ENCODE measurements at regions of chr7 and their contacts with region 1.

Region 1: GRCh38 chr7:129952653-129953560 is at the start of gene UBE2H:
- DNase-seq: peak; percentile 91
- H3K4me3 Mint-ChIP-seq: peak within 1 kb of the TSS; percentile 99
- H3K27ac Mint-ChIP-seq: peak within 1 kb of the TSS; percentile 96
- H3K4me1 Mint-ChIP-seq: peaks cover 4% of the 10 kb centered on the region
- H3K27me3 Mint-ChIP-seq: no peaks in the 10 kb centered on the region
- total RNA-seq, gene UBE2H: 33.4 to 37.6 TPM

Region 2: GRCh38 chr7:129611246-129612111 is 341.4 kb before region 1 on chr7 and contains the start of gene NRF1:
- CTCF ChIA-PET with region 1: no interaction called
- intact Hi-C with region 1: loop called (anchors 2 kb)
- DNase-seq: peak; percentile 91
- H3K4me3 Mint-ChIP-seq: peak within 1 kb of the TSS; percentile 97
- H3K27ac Mint-ChIP-seq: peak within 1 kb of the TSS; percentile 98
- H3K4me1 Mint-ChIP-seq: peaks cover 56% of the 10 kb centered on the region
- H3K27me3 Mint-ChIP-seq: no peaks in the 10 kb centered on the region
- total RNA-seq, gene NRF1: 18.5 to 21.5 TPM

Region 3: GRCh38 chr7:129875745-129876411 is 77.0 kb before region 1 on chr7:
- CTCF ChIA-PET with region 1: no interaction called
- intact Hi-C with region 1: loop called (anchors 2 kb)
- DNase-seq: no peak
- H3K4me3 Mint-ChIP-seq: no peak overlapping the region
- H3K27ac Mint-ChIP-seq: no peak overlapping the region
- H3K4me1 Mint-ChIP-seq: peaks cover 48% of the 10 kb centered on the region
- H3K27me3 Mint-ChIP-seq: no peaks in the 10 kb centered on the region

Region 4: DNA sequence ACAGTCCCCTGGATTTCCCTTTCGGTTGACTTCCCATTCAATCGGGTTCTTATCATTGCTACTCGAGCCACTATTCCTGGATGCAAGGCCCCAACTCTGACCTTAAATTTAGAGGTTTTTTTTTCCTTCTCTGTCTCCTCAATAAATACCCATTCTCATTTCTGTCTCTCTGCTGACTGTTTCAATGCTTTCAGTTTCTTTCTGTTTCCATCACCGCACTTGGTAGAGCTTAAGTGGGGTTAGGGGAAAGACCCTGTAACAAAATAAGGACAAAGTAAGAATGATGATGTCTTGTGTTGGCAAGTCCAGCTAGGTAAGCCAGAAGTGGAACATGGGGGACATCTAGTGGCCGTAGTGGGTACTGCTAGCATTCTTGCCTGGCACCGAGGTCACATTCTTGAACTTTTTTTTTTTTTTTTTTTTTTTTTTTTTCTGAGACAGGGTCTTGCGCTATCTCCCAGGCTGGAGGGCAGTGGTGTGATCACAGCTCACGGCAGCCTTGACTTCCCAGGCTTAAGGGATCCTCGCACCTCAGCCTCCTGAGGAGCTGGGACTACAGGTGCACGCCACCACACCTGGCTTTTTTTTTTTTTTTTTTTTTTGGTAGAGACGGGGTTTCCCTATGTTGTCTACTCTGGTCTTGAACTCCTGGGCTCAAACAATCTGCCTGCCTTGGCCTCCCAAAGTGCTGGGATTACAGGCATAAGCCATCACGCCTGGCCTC is 57.9 kb after region 1 on chr7:
- CTCF ChIA-PET with region 1: interaction called, 11 read pairs
- intact Hi-C with region 1: loop called (anchors 1 kb)
- DNase-seq: peak; percentile 98
- H3K4me3 Mint-ChIP-seq: no peak overlapping the region
- H3K27ac Mint-ChIP-seq: peak overlapping the region; percentile 64
- H3K4me1 Mint-ChIP-seq: peaks cover 13% of the 10 kb centered on the region
- H3K27me3 Mint-ChIP-seq: no peaks in the 10 kb centered on the region

Region 5: DNA sequence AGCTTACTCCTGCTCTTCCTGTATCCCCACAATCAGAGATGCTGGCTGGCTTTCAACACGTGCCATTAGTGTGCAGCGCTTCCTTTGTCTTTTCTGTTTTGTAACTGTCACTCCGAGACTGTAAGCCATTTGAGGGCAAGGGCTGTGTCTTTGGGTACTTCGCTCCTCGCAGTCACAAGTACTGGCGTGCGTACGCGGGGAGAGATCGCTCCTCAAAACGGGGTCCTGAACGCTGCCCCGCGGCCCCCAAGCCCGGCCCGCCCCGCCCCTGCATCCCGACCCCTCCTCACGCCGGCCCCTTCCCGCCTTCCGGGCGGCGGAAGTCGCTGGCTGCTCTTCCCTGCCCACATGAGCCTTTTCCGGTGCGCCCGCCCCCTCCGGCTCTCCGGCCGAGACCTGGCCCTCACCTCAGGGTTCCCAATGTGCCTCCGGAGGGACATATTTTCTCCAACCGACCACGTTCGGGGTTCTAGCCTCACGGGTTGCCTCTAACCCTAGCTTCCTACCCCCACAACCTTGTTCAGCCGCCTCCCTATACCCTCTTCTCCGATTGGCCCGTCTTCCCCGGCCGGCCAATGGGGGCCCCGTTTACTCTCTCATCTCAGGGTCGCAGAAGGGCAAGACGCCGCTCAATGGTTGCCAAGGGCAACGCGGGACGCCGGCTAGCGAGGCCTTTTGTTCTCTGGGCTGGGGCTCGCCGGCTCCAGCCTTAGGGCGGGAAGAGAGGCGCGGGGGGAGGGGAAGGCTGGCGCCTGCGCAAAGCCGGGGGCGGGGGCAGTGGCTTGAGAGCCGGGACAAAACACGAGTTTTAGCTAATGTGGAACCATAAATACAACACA is 487.8 kb after region 1 on chr7 and contains the start of gene CEP41:
- CTCF ChIA-PET with region 1: no interaction called
- intact Hi-C with region 1: loop called (anchors 10 kb)
- DNase-seq: peak; percentile 98
- H3K4me3 Mint-ChIP-seq: peak within 1 kb of the TSS; percentile 98
- H3K27ac Mint-ChIP-seq: peak within 1 kb of the TSS; percentile 98
- H3K4me1 Mint-ChIP-seq: peaks cover 50% of the 10 kb centered on the region
- H3K27me3 Mint-ChIP-seq: no peaks in the 10 kb centered on the region
- total RNA-seq, gene CEP41: 16.0 to 18.2 TPM

Measured in activated naive CD4-positive, alpha-beta T cell treated with anti-CD3 and anti-CD28 coated beads for 36 hours (primary cell).